IMR-90 (cell line): ENCODE measurements at regions of chr10 and their contacts with region 1.

Region 1: DNA sequence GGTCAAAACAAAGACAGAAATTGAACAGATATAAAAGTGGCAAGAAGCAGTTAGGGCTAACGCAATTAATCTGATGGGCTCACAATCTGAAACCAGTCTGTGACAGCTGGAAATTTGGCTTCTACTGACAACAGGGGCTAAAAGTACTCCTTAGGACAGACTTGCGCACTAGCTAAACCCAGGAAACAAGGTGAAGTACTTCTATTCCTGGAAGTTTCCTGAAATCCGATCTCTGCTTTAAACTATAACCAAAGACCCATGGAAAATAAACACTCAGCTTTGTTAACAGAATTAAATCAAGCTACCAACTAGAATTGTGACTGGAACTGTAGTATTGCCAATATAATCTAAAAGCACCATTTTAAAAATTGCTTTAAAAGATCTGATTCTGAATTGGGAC is 520.2 kb upstream of the ZWINT start:
- DNase-seq: no peak
- ATAC-seq: no peak
- H3K4me3 ChIP-seq: no peak overlapping the region
- H3K27ac ChIP-seq: no peak overlapping the region
- H3K4me1 ChIP-seq: no peaks in the 10 kb centered on the region
- H3K27me3 ChIP-seq: no peaks in the 10 kb centered on the region
- CTCF ChIP-seq: no peak
- POLR2A ChIP-seq: no peak
- RAD21 ChIP-seq: no peak

Region 2: DNA sequence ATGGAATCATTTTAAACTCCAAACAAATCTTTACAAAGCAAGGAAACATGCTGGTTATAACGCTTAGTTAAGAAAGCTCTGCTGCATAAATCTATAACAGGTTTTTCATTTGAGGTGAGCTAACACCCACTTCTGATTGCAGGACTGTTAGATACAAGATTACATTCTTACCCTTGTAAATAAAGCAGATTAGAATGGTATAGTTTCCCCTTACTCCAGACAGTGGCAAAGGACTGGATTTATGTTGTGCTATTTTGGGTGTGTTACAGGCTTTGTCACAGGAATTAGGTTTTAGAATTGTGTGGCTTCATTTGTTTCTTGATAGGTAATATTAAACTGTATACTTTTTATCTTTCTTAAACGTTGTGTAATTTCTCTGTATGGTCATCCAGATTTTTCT is 1007.7 kb before region 1 on chr10:
- CTCF ChIA-PET with region 1: no interaction called
- POLR2A ChIA-PET with region 1: interaction called, 20 read pairs
- dilution Hi-C with region 1: no loop called
- in situ Hi-C with region 1: no loop called
- intact Hi-C with region 1: no loop called
- DNase-seq: no peak
- ATAC-seq: no peak
- H3K4me3 ChIP-seq: no peak overlapping the region
- H3K27ac ChIP-seq: no peak overlapping the region
- H3K4me1 ChIP-seq: no peaks in the 10 kb centered on the region
- H3K27me3 ChIP-seq: no peaks in the 10 kb centered on the region
- CTCF ChIP-seq: no peak
- POLR2A ChIP-seq: no peak
- RAD21 ChIP-seq: no peak